ENCODE measurements at regions of chr3 and their contacts with region 1.

Region 1: GRCh38 chr3:150787741-150788370 is 24.9 kb upstream of the SIAH2 start:
- DNase-seq: peak; percentile 57 to 81 (median 68)
- H3K4me3 ChIP-seq: no peak overlapping the region
- H3K4me3 Mint-ChIP-seq: peak overlapping the region in 1 of 7 donors; percentile 30
- H3K27ac ChIP-seq: no peak overlapping the region
- H3K27ac Mint-ChIP-seq: peak overlapping the region in 1 of 8 donors; percentile 4
- H3K4me1 ChIP-seq: no peaks in the 10 kb centered on the region
- H3K4me1 Mint-ChIP-seq: peaks cover 0 to 7% (median 6%) of the 10 kb centered on the region in 3 donors
- H3K27me3 ChIP-seq: no peaks in the 10 kb centered on the region
- H3K27me3 Mint-ChIP-seq: peaks cover 3 to 10% of the 10 kb centered on the region in 2 donors

Region 2: GRCh38 chr3:150775091-150775501 is 12.8 kb before region 1 on chr3:
- CTCF ChIA-PET with region 1: interaction called, 25 read pairs
- POLR2A ChIA-PET with region 1: no interaction called
- DNase-seq: no peak
- H3K4me3 ChIP-seq: no peak overlapping the region
- H3K4me3 Mint-ChIP-seq: no peak overlapping the region
- H3K27ac ChIP-seq: no peak overlapping the region
- H3K27ac Mint-ChIP-seq: no peak overlapping the region
- H3K4me1 ChIP-seq: no peaks in the 10 kb centered on the region
- H3K4me1 Mint-ChIP-seq: no peaks in the 10 kb centered on the region
- H3K27me3 ChIP-seq: no peaks in the 10 kb centered on the region
- H3K27me3 Mint-ChIP-seq: peaks cover 4 to 11% of the 10 kb centered on the region in 2 donors

Region 3: DNA sequence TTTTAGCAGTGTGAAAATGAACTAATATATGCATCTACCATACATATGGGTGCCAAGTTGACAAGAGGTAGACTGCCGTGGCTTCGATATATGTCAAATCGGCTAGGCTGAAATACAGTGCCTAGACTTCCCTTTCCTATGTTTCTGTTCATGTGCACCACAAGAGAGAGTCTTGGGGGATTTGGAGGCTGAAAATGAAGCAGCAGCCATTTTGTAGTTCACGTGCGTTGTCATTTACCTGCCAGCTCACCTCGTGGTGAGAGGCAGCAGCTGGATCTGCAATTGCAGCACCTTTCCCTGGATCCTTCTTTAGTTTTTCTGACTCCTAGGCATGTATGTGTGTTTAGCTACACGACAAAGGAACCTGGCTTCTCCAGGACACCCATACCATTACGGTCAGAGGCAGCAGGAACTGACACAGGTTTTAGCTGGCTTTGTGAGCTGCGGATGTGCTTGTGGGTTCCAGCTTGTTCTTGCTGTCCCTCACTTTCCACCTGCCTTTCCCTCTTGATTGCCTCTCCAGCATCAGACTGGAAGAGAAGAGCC is 15.7 kb after region 1 on chr3:
- CTCF ChIA-PET with region 1: interaction called, 10 read pairs
- POLR2A ChIA-PET with region 1: no interaction called
- DNase-seq: no peak
- H3K4me3 ChIP-seq: no peak overlapping the region
- H3K4me3 Mint-ChIP-seq: no peak overlapping the region
- H3K27ac ChIP-seq: no peak overlapping the region
- H3K27ac Mint-ChIP-seq: no peak overlapping the region
- H3K4me1 ChIP-seq: no peaks in the 10 kb centered on the region
- H3K4me1 Mint-ChIP-seq: peaks cover 0 to under 1% (median under 1%) of the 10 kb centered on the region in 3 donors
- H3K27me3 ChIP-seq: peaks cover 3% of the 10 kb centered on the region
- H3K27me3 Mint-ChIP-seq: peaks cover 6 to 48% of the 10 kb centered on the region in 2 donors

Measured in CD8-positive, alpha-beta memory T cell (primary cell).